ENCODE measurements at regions of chr4 and their contacts with region 1.

Region 1: GRCh38 chr4:21469438-21470300 is 478.9 kb downstream of the KCNIP4 start:
- DNase-seq: peak; percentile 11
- ATAC-seq: no peak
- H3K4me3 ChIP-seq: no peak overlapping the region
- H3K27ac ChIP-seq: no peak overlapping the region
- H3K4me1 ChIP-seq: no peaks in the 10 kb centered on the region
- H3K27me3 ChIP-seq: no peaks in the 10 kb centered on the region; a peak in 1 of 5 replicates
- CTCF ChIP-seq: peak; percentile 52
- EP300 ChIP-seq: no peak
- POLR2A ChIP-seq: no peak
- RAD21 ChIP-seq: no peak

Region 2: DNA sequence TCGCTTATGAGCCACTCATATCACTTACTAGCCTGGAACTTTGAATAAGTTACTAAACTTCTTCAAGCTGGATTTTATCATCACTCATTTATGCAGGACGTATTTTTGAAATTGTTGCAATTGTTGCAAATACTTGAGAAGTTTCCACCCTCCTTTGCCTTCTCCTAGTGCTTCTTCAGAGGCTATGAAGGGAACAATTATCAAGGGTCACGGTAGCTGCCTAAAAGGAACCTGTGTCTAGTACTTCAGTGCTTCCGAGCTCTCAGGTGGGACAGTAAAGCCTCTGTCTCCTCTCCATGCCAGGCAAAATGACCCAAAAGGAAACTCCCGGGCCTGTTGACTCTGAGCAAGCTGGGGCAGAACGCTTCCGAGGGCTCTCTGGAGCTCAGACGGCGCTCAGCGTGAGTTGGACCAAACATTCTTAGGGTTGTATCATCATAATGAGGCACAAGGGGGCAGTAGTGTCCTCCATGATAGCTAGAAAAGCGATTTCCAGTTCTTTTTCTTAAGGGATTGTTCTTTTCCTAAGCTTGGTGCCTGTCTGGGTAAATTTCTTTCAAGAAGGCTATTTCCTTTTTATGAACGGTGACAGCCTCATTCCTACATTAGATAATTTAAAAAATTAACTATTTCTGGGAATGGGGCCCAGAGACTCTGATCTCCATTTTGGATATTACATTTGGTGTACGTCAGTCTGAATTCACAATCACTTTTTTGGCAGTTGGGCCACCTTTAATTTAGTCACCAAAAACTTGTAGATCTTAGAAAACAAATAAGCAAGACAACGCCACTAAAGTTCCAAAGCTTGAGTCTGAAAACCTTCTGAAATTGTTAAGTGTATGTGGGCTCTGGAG is 696.3 kb before region 1 on chr4:
- CTCF ChIA-PET with region 1: interaction called, 9 read pairs
- POLR2A ChIA-PET with region 1: no interaction called
- in situ Hi-C with region 1: loop called (anchors 5 kb)
- intact Hi-C with region 1: loop called (anchors 1 kb)
- DNase-seq: peak; percentile 40
- ATAC-seq: peak; percentile 98
- H3K4me3 ChIP-seq: no peak overlapping the region
- H3K27ac ChIP-seq: no peak overlapping the region
- H3K4me1 ChIP-seq: no peaks in the 10 kb centered on the region
- H3K27me3 ChIP-seq: peaks cover 0 to 2% of the 10 kb centered on the region in 2 experiments; a peak in 1 of 5 replicates
- CTCF ChIP-seq: peak; percentile 78
- EP300 ChIP-seq: no peak
- POLR2A ChIP-seq: no peak
- RAD21 ChIP-seq: no peak

Region 3: DNA sequence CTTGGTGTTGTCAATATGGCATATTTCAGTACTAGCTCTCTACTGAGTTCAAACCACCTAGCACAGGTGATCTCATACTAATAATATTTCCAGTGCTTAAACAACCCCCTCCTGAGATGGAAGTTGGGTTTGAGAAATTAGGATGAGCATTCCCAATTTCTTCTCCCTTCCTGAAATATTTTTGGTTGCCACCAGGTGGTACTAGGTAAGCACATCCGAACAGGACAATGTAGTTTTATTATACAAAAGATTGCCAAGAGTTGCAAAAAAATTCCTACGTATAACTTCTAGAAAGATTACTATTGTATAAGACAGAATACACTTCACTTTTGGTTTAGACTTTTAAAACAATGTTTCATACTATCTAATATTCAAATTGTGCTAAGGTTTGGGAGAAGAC is 284.9 kb before region 1 on chr4:
- CTCF ChIA-PET with region 1: no interaction called
- POLR2A ChIA-PET with region 1: no interaction called
- in situ Hi-C with region 1: no loop called
- intact Hi-C with region 1: loop called (anchors 1 kb)
- DNase-seq: no peak
- ATAC-seq: no peak
- H3K4me3 ChIP-seq: no peak overlapping the region
- H3K27ac ChIP-seq: no peak overlapping the region
- H3K4me1 ChIP-seq: no peaks in the 10 kb centered on the region
- H3K27me3 ChIP-seq: no peaks in the 10 kb centered on the region
- CTCF ChIP-seq: no peak
- EP300 ChIP-seq: no peak
- POLR2A ChIP-seq: no peak
- RAD21 ChIP-seq: no peak

Measured in HepG2 (cell line).